ENCODE measurements at regions of chr14 and their contacts with region 1.

Region 1: DNA sequence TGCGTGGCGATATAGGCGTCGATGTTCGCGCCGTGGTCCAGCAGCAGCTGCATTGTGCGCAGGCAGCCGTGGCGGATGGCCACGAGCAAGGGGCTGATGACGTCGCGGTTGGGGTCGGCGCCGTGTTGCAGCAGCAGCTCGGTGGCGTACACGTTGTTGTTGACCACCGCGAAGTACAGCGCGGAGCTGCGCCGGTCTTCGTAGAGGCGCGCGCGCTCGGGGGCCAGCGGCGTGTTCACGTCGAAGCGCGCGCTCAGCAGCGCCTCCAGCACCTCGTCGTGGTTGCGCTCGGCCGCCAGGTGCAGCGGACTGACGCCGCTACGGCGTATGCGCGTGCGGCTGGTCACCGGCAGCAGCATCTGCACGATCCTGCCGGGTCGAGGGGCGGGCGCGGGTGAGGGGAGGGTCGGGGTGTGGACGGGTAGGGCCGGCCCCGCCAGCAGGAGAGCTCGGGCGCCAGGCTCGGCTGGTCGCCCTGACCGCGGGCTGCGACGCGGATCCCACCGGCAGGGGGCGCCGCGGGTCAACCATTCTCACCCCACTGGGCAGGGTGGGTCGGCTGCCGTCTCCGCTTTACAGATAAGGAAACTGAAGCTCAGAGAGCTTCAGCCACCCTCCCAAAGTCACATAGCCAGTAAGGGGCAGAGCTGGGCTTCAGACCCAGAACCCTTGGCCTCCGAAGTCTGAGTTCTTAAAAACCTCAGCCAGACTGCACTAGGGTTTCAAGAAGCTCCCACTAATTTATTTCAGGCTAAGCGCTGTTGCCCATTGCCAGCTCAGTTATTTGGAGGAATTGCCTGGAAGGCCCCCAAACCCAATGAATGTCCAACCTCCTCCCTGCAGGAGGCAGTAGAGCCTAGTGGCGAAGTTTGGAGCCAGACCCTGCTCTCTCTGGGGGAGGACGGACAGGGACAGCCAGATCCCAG is 12.4 kb downstream of the FAM181A start:
- DNase-seq: peak; percentile 74
- H3K4me3 Mint-ChIP-seq: no peak overlapping the region
- H3K27ac Mint-ChIP-seq: no peak overlapping the region
- H3K4me1 Mint-ChIP-seq: peaks cover 16% of the 10 kb centered on the region
- H3K27me3 Mint-ChIP-seq: no peaks in the 10 kb centered on the region
- CTCF ChIP-seq: peak; percentile 89

Region 2: GRCh38 chr14:93747102-93747501 is 192.5 kb before region 1 on chr14:
- CTCF ChIA-PET with region 1: no interaction called
- POLR2A ChIA-PET with region 1: no interaction called
- intact Hi-C with region 1: no loop called
- DNase-seq: no peak
- H3K4me3 Mint-ChIP-seq: no peak overlapping the region
- H3K27ac Mint-ChIP-seq: no peak overlapping the region
- H3K4me1 Mint-ChIP-seq: no peaks in the 10 kb centered on the region
- H3K27me3 Mint-ChIP-seq: peaks cover 2% of the 10 kb centered on the region
- CTCF ChIP-seq: no peak

Region 3: DNA sequence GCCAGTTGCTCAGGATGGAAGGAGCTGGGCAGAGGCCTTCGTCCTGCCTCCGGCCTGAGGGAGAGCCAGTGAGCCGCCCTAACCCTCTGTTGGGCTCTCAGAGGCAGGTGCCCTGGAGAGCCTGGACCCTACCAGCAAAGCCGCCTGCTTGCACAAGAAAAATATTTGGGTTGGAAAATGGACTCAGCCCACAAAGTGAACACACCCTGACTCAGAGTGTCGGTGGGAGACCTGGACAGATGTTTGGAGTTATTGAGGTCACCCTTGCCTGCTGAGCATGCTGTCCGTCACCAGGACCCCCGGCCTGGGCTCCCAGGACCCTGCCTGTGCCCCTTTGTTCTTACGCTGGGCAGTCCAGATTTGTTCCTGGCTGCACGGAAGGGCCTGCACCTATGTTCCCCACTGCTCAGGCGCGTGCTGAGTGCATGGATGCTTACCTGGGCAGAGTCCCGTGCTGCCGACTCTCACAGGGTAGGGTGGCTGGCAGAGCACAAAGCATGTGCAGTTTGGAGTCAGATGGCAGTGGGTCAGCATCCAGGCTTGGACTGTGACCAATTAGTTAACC is 10.0 kb after region 1 on chr14:
- CTCF ChIA-PET with region 1: interaction called, 12 read pairs
- POLR2A ChIA-PET with region 1: interaction called, 6 read pairs
- intact Hi-C with region 1: no loop called
- DNase-seq: no peak
- H3K4me3 Mint-ChIP-seq: no peak overlapping the region
- H3K27ac Mint-ChIP-seq: no peak overlapping the region
- H3K4me1 Mint-ChIP-seq: peaks cover 12% of the 10 kb centered on the region
- H3K27me3 Mint-ChIP-seq: no peaks in the 10 kb centered on the region
- CTCF ChIP-seq: no peak

Region 4: GRCh38 chr14:93959239-93960107 is 19.9 kb after region 1 on chr14:
- CTCF ChIA-PET with region 1: interaction called, 9 read pairs
- POLR2A ChIA-PET with region 1: interaction called, 11 read pairs
- intact Hi-C with region 1: loop called (anchors 2 kb)
- DNase-seq: peak; percentile 99
- H3K4me3 Mint-ChIP-seq: peak overlapping the region; percentile 18
- H3K27ac Mint-ChIP-seq: peak overlapping the region; percentile 79
- H3K4me1 Mint-ChIP-seq: peaks cover 16% of the 10 kb centered on the region
- H3K27me3 Mint-ChIP-seq: no peaks in the 10 kb centered on the region
- CTCF ChIP-seq: no peak

Region 5: GRCh38 chr14:93970549-93970946 is 31.0 kb after region 1 on chr14:
- CTCF ChIA-PET with region 1: interaction called, 3 read pairs
- POLR2A ChIA-PET with region 1: interaction called, 3 read pairs
- intact Hi-C with region 1: loop called (anchors 1 kb)
- DNase-seq: peak; percentile 61
- H3K4me3 Mint-ChIP-seq: no peak overlapping the region
- H3K27ac Mint-ChIP-seq: no peak overlapping the region
- H3K4me1 Mint-ChIP-seq: peaks cover 6% of the 10 kb centered on the region
- H3K27me3 Mint-ChIP-seq: peaks cover 4% of the 10 kb centered on the region
- CTCF ChIP-seq: peak; percentile 26

Region 6: DNA sequence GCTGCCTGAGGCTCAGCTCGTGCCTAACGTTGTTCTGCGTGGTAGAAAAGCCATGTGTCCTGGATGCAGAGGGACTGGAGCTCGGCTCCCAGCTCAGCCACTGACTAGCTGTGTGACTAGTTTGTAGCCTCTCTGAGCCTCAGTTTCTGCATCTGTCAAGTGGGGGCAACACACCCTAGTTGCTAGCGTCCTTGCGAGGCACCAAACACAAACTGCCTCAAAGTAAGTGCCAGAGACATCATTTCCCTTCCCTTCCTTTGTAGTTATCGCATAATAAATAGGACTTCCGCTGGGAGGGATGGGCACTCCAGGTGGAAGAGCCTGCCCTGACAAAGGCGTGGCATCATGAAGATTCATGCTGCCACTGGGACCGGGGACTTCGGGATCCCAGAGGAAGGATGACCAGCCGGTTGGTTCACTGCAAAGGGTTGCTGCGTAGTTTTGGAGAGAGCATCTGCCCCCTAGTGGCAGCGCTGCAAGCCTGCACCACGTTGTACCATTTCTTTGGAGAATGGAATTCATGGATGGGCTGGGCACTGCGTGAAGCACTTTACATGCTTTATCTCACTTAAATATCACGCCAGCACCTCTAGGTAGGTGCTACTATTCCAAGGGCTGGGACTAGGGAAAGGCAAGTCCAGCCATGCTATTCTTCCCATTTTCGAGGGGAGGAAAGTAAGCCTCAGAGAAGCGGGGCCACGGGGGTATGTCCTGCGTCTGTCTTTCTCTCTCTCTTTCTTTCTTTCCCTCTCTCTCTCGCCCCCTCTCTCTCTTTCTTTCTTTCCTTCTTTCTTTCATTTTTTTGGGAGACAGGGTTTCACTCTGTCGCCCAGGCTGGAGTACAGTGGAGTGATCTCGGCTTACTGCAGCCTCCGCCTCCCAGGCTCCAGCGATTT is 62.2 kb after region 1 on chr14:
- CTCF ChIA-PET with region 1: interaction called, 18 read pairs
- POLR2A ChIA-PET with region 1: interaction called, 4 read pairs
- intact Hi-C with region 1: loop called (anchors 1 kb)
- DNase-seq: peak; percentile 63
- H3K4me3 Mint-ChIP-seq: no peak overlapping the region
- H3K27ac Mint-ChIP-seq: no peak overlapping the region
- H3K4me1 Mint-ChIP-seq: peaks cover 5% of the 10 kb centered on the region
- H3K27me3 Mint-ChIP-seq: peaks cover 12% of the 10 kb centered on the region
- CTCF ChIP-seq: peak; percentile 88